IMR-90 (cell line): ENCODE measurements at regions of chr6 and their contacts with region 1.

Region 1: GRCh38 chr6:52976591-52977035 is 18.5 kb downstream of the GSTA4 start:
- DNase-seq: no peak
- ATAC-seq: no peak
- H3K4me3 ChIP-seq: no peak overlapping the region
- H3K27ac ChIP-seq: no peak overlapping the region
- H3K4me1 ChIP-seq: peaks cover 2% of the 10 kb centered on the region; the same call in 1 of the 2 replicates
- H3K27me3 ChIP-seq: no peaks in the 10 kb centered on the region
- CTCF ChIP-seq: no peak
- POLR2A ChIP-seq: no peak
- RAD21 ChIP-seq: no peak

Region 2: GRCh38 chr6:52760105-52760765 is 216.4 kb before region 1 on chr6:
- CTCF ChIA-PET with region 1: no interaction called
- POLR2A ChIA-PET with region 1: no interaction called
- dilution Hi-C with region 1: no loop called
- in situ Hi-C with region 1: no loop called
- intact Hi-C with region 1: no loop called
- DNase-seq: no peak
- ATAC-seq: no peak
- H3K4me3 ChIP-seq: no peak overlapping the region
- H3K27ac ChIP-seq: no peak overlapping the region
- H3K4me1 ChIP-seq: no peaks in the 10 kb centered on the region
- H3K27me3 ChIP-seq: peaks cover 7% of the 10 kb centered on the region; the same call in 1 of the 2 replicates
- CTCF ChIP-seq: no peak
- POLR2A ChIP-seq: no peak
- RAD21 ChIP-seq: no peak

Region 3: DNA sequence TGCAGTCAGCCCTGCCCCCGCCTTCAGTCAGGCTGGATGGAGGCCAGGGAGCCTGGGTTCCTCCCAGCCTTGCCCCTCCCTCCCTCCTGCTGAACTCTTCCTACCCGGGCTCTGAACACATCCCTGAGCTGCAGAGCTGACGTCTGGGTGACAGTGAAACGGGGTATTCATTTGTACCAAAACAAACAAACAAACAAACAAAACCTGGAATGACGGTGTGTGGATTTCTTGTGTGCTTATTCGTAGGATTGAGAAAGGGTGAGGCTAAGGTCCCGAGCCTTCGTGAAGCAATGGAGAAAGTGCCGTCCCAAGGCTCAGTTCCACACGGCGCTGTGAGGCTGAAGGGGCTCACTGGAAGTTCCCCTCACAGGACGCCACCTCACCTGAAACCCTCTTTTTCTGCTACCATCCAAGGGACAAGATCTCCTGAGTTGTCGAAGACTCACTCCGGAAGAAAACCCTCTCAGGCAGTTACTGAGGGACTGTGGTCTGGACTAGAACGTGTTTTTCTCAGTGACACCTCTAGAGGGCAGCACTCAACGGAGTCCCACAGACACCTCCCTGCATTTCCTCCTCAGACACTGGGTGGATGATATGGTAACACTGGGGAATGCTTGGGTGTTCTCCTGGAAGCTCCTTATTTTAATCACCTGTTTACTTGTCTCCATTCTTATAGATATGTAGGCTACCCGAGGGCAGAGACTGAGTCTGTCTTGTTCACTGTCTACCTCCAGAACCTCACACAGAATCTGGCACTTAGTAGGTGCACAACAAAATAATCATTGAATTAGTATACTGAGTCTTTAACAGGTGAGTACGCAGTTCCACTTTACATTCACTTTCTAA is 94.4 kb before region 1 on chr6:
- CTCF ChIA-PET with region 1: no interaction called
- POLR2A ChIA-PET with region 1: no interaction called
- dilution Hi-C with region 1: no loop called
- in situ Hi-C with region 1: no loop called
- intact Hi-C with region 1: loop called (anchors 5 kb)
- DNase-seq: peak; percentile 63
- ATAC-seq: peak; percentile 99
- H3K4me3 ChIP-seq: peak overlapping the region; percentile 49
- H3K27ac ChIP-seq: peak overlapping the region; percentile 68
- H3K4me1 ChIP-seq: peaks cover 5% of the 10 kb centered on the region
- H3K27me3 ChIP-seq: no peaks in the 10 kb centered on the region
- CTCF ChIP-seq: peak; percentile 69
- POLR2A ChIP-seq: no peak
- RAD21 ChIP-seq: peak; percentile 66

Region 4: GRCh38 chr6:52929321-52930164 is 47.1 kb before region 1 on chr6:
- CTCF ChIA-PET with region 1: no interaction called
- POLR2A ChIA-PET with region 1: no interaction called
- dilution Hi-C with region 1: no loop called
- in situ Hi-C with region 1: no loop called
- intact Hi-C with region 1: loop called (anchors 10 kb)
- DNase-seq: peak; percentile 93
- ATAC-seq: peak; percentile 82
- H3K4me3 ChIP-seq: no peak overlapping the region
- H3K27ac ChIP-seq: peak overlapping the region; percentile 68; the same call in 1 of the 2 replicates
- H3K4me1 ChIP-seq: peaks cover 8% of the 10 kb centered on the region
- H3K27me3 ChIP-seq: no peaks in the 10 kb centered on the region
- CTCF ChIP-seq: no peak
- POLR2A ChIP-seq: no peak
- RAD21 ChIP-seq: no peak

Region 5: GRCh38 chr6:53090576-53090975 is 114.0 kb after region 1 on chr6:
- CTCF ChIA-PET with region 1: no interaction called
- POLR2A ChIA-PET with region 1: no interaction called
- dilution Hi-C with region 1: no loop called
- in situ Hi-C with region 1: no loop called
- intact Hi-C with region 1: no loop called
- DNase-seq: peak; percentile 51
- ATAC-seq: no peak; the same call in 1 of the 2 replicates
- H3K4me3 ChIP-seq: no peak overlapping the region
- H3K27ac ChIP-seq: no peak overlapping the region
- H3K4me1 ChIP-seq: peaks cover 2% of the 10 kb centered on the region; the same call in 1 of the 2 replicates
- H3K27me3 ChIP-seq: no peaks in the 10 kb centered on the region
- CTCF ChIP-seq: no peak
- POLR2A ChIP-seq: no peak
- RAD21 ChIP-seq: no peak